ENCODE measurements at regions of chr4 and their contacts with region 1.

Region 1: DNA sequence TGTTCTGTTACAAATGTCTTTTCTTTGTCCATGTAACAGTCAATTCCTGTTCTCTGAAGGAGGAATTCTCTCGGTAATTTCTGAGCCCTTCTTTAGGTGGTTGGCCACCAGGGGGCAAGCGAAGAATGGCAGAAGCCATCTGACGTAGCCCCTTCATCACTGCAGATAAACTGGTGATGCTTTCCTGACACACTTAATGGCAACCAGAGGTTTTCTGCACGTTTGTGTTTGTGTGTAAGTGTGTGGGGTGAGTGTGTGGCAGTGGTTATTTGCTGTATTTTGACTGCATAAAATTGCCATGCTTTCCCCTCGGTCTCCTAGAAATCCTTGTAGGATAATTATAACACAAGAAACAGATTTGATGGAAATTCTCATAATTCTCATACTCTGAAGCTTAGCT is 64.8 kb upstream of the STOX2 start:
- DNase-seq: peak; percentile 78 to 97 (median 91)

Region 2: DNA sequence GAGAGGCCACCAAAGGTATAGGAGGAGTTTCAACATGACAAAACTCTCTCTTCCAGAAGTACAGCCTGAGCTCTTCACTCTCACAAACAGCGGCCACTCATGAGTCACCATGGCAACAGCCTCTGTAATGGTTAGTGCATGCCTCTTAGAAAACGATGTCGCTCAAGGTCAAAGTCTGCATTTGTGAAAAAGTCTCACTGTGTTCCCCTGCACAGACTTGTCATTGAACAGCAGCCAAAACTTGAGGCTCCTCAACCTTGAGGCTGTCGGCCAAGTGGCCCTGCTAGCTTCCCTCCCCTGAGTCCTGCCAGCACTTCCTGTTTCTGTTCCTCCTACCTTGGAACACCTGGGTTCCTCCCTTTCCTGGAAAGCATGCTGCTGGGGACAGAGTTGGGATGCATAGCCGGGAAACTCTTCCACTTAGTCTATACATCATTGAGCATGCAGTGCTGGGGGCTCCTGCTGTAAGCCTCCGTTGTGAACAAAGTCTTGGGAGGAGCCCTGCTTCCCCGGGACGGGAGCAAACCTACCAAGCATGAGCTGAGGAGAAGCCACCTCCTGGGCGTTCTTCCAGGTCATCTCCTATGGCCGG is 268.9 kb before region 1 on chr4:
- intact Hi-C with region 1: no loop called
- DNase-seq: peak in 1 of 42 donors; percentile 5

Region 3: GRCh38 chr4:183610033-183610432 is 230.3 kb before region 1 on chr4:
- intact Hi-C with region 1: no loop called
- DNase-seq: no peak

Region 4: GRCh38 chr4:184100297-184100885 is 260.1 kb after region 1 on chr4:
- intact Hi-C with region 1: loop called (anchors 5 kb)
- DNase-seq: peak in 34 of 42 donors; percentile 12 to 84 (median 64)

Region 5: DNA sequence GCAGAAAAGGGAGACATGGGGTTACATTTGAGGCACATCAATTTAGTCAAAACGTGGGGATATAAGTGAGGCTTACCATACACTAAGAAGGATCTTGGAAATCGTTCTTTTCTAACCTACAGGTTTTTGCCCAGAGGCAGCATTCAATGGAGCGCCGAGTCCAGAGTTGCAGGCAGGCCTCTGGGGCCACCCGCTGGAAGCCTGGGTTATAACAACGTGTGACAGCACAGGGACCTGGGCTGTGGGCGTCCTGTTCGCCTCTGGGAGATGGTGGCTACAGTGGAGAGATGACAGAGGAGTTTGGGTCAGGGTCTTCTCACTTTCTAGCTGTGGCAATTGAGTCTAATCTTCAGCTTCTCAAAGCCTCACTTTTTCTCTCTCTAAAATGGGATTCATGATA is 323.5 kb after region 1 on chr4:
- intact Hi-C with region 1: loop called (anchors 2 kb)
- DNase-seq: peak; percentile 40 to 88 (median 72)

Measured in head of caudate nucleus (tissue), 42 donors.